IMR-90 (cell line): ENCODE measurements at regions of chr14 and their contacts with region 1.

Region 1: DNA sequence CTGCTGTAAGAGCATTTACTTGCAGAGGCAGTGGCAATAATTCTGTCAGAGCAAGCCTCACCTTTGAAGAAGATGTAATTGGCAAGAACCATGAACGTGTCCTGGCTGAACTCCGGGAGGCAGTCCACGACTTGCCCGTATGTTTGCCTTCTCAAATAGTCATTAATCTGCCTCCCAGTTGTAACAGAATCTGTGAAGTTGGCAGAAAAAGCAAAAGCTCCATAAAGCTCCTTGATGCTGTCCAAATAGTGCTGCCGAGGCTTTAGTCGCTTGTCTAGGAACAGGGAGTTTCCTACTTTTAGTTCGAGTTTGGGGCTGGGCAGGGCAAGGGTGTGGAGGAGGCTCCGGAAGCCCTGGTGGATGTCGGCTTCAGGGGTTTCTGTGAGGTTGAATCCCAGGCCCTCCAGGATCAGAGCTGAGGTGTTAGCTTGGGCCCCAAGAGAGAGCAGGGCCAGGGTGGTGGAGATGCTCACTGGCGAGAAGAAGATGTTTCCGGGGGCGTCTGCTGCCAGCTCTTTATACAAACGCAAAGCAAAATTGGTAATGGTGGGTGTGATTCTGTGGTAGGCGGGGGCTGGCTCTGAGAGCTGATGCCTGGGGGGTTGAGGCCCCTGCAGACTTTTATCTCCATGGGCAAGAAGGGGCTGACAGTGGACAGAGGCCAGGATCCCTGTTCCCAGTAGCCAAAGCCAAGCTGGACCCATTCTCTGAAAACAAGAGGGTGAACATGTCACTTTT is 4.4 kb downstream of the SERPINA11 start:
- DNase-seq: no peak
- ATAC-seq: no peak
- H3K4me3 ChIP-seq: no peak overlapping the region
- H3K27ac ChIP-seq: no peak overlapping the region
- H3K4me1 ChIP-seq: no peaks in the 10 kb centered on the region
- H3K27me3 ChIP-seq: no peaks in the 10 kb centered on the region; the same call in 1 of the 2 replicates
- CTCF ChIP-seq: no peak
- POLR2A ChIP-seq: no peak
- RAD21 ChIP-seq: no peak

Region 2: DNA sequence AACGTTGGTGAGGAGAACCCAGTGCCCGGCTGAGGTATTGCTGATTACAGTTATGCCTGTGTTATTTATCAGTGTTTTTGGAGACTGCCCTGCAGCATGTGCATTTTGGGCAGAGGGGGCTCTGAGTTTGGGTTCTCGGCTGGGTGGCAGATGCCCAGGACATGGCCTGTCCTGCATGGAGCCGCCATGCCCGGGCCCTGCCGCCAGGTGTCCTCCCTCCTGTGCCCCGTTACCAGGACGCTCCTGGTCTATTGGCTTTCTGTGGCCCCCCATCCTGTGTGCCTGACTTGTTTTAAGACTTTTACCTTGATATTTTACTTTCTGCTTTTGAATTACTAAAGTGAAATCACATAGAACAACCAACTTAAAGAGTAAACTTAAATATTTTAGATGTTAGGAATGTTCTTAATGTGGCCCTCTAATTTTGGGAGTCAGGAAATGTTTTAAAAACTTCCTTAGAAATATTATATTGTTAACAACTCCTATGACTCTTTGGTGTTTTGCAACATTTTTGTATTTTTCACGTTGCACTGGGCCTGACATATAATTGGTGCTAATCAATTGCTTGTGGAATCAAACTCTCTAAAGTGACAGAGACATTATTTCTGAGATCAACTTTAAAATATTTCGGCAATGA is 711.7 kb before region 1 on chr14:
- CTCF ChIA-PET with region 1: interaction called, 17 read pairs
- POLR2A ChIA-PET with region 1: no interaction called
- dilution Hi-C with region 1: no loop called
- in situ Hi-C with region 1: no loop called
- intact Hi-C with region 1: no loop called
- DNase-seq: no peak
- ATAC-seq: no peak
- H3K4me3 ChIP-seq: no peak overlapping the region
- H3K27ac ChIP-seq: no peak overlapping the region
- H3K4me1 ChIP-seq: no peaks in the 10 kb centered on the region
- H3K27me3 ChIP-seq: no peaks in the 10 kb centered on the region
- CTCF ChIP-seq: no peak
- POLR2A ChIP-seq: no peak
- RAD21 ChIP-seq: no peak

Region 3: GRCh38 chr14:94473666-94474410 is 25.6 kb after region 1 on chr14:
- CTCF ChIA-PET with region 1: interaction called, 4 read pairs
- POLR2A ChIA-PET with region 1: interaction called, 12 read pairs
- dilution Hi-C with region 1: no loop called
- in situ Hi-C with region 1: no loop called
- intact Hi-C with region 1: no loop called
- DNase-seq: no peak
- ATAC-seq: no peak
- H3K4me3 ChIP-seq: no peak overlapping the region
- H3K27ac ChIP-seq: no peak overlapping the region
- H3K4me1 ChIP-seq: no peaks in the 10 kb centered on the region
- H3K27me3 ChIP-seq: no peaks in the 10 kb centered on the region
- CTCF ChIP-seq: no peak
- POLR2A ChIP-seq: no peak
- RAD21 ChIP-seq: no peak